ENCODE measurements at regions of chr17 and their contacts with region 1.

Region 1: GRCh38 chr17:66633317-66633965 is 201.5 kb upstream of the CACNG5 start:
- DNase-seq: peak; percentile 66
- H3K4me3 Mint-ChIP-seq: peak overlapping the region; percentile 41
- H3K27ac Mint-ChIP-seq: peak overlapping the region; percentile 85
- H3K4me1 Mint-ChIP-seq: peaks cover 78% of the 10 kb centered on the region
- H3K27me3 Mint-ChIP-seq: no peaks in the 10 kb centered on the region

Region 2: GRCh38 chr17:66248285-66248684 is 385.2 kb before region 1 on chr17:
- intact Hi-C with region 1: loop called (anchors 2 kb)
- DNase-seq: no peak
- H3K4me3 Mint-ChIP-seq: no peak overlapping the region
- H3K27ac Mint-ChIP-seq: no peak overlapping the region
- H3K4me1 Mint-ChIP-seq: peaks cover 17% of the 10 kb centered on the region
- H3K27me3 Mint-ChIP-seq: no peaks in the 10 kb centered on the region

Region 3: GRCh38 chr17:66397486-66397885 is 236.0 kb before region 1 on chr17:
- intact Hi-C with region 1: loop called (anchors 5 kb)
- DNase-seq: no peak
- H3K4me3 Mint-ChIP-seq: no peak overlapping the region
- H3K27ac Mint-ChIP-seq: peak overlapping the region; percentile 69
- H3K4me1 Mint-ChIP-seq: peaks cover 80% of the 10 kb centered on the region
- H3K27me3 Mint-ChIP-seq: no peaks in the 10 kb centered on the region

Region 4: GRCh38 chr17:66567234-66568170 is 65.9 kb before region 1 on chr17:
- intact Hi-C with region 1: loop called (anchors 5 kb)
- DNase-seq: peak; percentile 63
- H3K4me3 Mint-ChIP-seq: no peak overlapping the region
- H3K27ac Mint-ChIP-seq: peak overlapping the region; percentile 25
- H3K4me1 Mint-ChIP-seq: peaks cover 37% of the 10 kb centered on the region
- H3K27me3 Mint-ChIP-seq: no peaks in the 10 kb centered on the region

Region 5: GRCh38 chr17:66667491-66668030 is 34.1 kb after region 1 on chr17:
- intact Hi-C with region 1: loop called (anchors 1 kb)
- DNase-seq: peak; percentile 61
- H3K4me3 Mint-ChIP-seq: peak overlapping the region; percentile 67
- H3K27ac Mint-ChIP-seq: peak overlapping the region; percentile 88
- H3K4me1 Mint-ChIP-seq: peaks cover 76% of the 10 kb centered on the region
- H3K27me3 Mint-ChIP-seq: peaks cover 3% of the 10 kb centered on the region

Region 6: DNA sequence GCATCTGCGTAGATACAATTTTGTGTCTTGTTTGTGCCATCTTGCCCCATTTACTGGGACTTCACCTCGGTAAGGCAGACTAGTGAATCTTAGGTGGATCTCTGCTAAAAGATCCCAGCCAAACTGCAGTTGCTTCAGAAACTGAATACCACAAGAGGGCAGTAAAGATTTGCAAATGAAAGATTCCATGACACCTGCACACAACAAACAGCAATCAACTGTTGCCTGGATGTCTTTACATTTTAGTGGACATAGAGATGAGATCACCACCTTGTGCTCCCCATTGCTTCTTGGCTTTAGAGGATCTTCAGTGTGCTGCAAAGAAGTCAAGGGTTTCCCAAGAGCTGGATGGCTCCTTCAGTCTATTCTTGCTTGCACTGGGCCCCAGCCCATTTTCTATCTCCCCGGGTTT is 82.3 kb after region 1 on chr17:
- intact Hi-C with region 1: loop called (anchors 2 kb)
- DNase-seq: no peak
- H3K4me3 Mint-ChIP-seq: no peak overlapping the region
- H3K27ac Mint-ChIP-seq: peak overlapping the region; percentile 72
- H3K4me1 Mint-ChIP-seq: peaks cover 54% of the 10 kb centered on the region
- H3K27me3 Mint-ChIP-seq: no peaks in the 10 kb centered on the region

Measured in activated T-helper 1 cell treated with anti-CD3 and anti-CD28 coated beads, Interleukin-12 subunit alpha, Interleukin-12 subunit beta, Interleukin-2, Interleukin-4 antibody, amounts not matched to agents 30 ng/mL and 10 ng/mL and 1 ng/mL, durations not matched to agents 14 hours and 24 hours and 36 hours (primary cell).